Breast epithelium (tissue), 4 donors: ENCODE measurements at regions of chr4 and their contacts with region 1.

Region 1: DNA sequence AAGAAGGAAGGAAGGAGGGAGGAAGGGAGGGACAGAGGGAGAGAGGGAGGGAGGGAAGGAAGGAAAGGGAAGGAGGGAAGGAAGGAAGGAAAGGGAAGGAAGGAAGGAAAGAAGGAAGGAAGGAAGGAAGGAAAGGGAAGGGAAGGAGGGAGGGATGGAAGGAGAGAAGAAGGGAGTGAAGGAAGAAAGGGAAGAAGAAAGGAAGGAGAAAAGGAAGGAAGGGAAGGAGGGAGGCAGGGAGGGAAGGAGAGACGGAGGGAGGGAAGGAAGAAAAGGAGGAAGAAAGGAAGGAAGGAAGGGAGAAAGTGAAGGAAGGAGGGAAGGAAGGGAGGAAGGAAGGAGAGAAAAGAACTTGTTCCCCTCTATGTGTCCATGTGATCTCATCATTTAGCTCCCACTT is 465.0 kb downstream of the KCTD8 start:
- DNase-seq: no peak
- H3K4me3 ChIP-seq: no peak overlapping the region
- H3K27ac ChIP-seq: no peak overlapping the region
- H3K4me1 ChIP-seq: no peaks in the 10 kb centered on the region
- H3K27me3 ChIP-seq: no peaks in the 10 kb centered on the region
- CTCF ChIP-seq: no peak
- POLR2A ChIP-seq: no peak

Region 2: DNA sequence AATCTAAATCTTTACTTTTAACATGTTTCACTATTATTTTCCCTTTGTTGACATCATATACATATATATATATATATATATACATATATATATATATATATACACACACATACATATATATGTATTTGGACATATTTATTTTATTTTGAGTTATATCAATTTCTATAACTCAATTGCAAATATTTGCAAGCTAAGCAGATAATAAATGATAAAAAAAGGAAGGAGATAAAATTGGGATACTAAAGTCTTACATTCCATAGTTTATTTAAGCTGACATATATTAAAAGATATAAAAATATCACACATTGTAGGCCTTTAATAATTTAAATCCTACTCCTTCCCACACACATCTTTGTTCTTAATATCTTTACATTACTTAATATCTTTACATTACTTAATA is 718.9 kb before region 1 on chr4:
- intact Hi-C with region 1: loop called (anchors 5 kb)
- DNase-seq: no peak
- H3K4me3 ChIP-seq: no peak overlapping the region
- H3K27ac ChIP-seq: no peak overlapping the region
- H3K4me1 ChIP-seq: no peaks in the 10 kb centered on the region
- H3K27me3 ChIP-seq: no peaks in the 10 kb centered on the region
- CTCF ChIP-seq: no peak
- POLR2A ChIP-seq: no peak

Region 3: DNA sequence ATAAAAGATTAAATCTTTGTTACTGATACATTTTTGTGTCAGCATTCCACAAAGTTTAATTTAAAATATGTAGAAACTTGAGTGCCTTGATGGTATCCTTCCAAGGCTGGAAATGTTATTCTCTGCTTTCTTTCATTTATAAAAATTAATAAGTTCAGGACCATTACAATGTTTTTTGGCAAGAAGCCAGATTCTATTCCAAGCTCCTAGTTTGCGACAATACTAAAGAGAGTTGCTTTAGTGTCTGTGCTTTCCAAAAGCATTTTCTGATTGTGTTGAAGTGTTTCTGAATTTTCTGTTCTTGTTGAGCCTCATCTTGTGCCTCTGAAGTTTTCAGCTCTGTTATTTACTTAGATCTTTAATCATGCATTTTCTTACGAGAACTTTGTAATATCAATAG is 51.2 kb before region 1 on chr4:
- intact Hi-C with region 1: no loop called
- DNase-seq: no peak
- H3K4me3 ChIP-seq: no peak overlapping the region
- H3K27ac ChIP-seq: no peak overlapping the region
- H3K4me1 ChIP-seq: no peaks in the 10 kb centered on the region
- H3K27me3 ChIP-seq: no peaks in the 10 kb centered on the region
- CTCF ChIP-seq: no peak
- POLR2A ChIP-seq: no peak

Region 4: DNA sequence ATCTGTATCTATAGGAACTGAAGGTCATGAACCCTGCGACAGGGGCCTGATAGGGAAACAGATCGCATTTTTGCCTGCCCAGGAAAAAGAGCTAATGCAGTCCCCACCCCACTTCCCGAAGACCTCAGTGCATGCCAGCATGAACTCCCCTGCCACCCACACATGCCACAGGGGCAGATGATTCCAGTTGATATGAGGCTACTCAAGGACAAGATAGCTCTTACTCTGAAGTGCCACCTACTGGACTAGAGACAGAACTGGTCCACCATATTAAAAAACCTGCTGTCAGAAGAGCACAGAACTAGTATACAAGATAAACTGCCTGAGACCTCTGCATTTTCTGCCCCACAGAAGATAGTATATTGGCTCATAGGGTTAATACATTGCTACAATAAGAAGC is 599.8 kb after region 1 on chr4:
- intact Hi-C with region 1: no loop called
- DNase-seq: no peak
- H3K4me3 ChIP-seq: no peak overlapping the region
- H3K27ac ChIP-seq: no peak overlapping the region
- H3K4me1 ChIP-seq: no peaks in the 10 kb centered on the region
- H3K27me3 ChIP-seq: no peaks in the 10 kb centered on the region
- CTCF ChIP-seq: no peak
- POLR2A ChIP-seq: no peak